Heart right ventricle (tissue), 16 donors: ENCODE measurements at regions of chr11 and their contacts with region 1.

Region 1: DNA sequence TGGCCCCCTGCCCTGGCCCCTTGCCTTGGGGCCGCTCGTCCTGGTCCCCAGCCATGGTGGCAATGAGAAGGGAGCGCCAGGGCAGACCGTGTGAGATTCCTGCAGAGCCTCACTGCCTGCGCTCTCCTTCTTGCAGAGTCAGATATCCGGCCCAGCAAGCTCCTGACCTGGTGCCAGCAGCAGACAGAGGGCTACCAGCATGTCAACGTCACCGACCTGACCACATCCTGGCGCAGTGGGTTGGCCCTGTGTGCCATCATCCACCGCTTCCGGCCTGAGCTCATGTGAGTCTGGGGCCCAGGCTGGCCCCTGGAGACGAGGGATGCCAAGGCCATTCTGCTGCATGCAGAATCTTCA is 114.1 kb downstream of the MICAL2 start:
- DNase-seq: peak; percentile 76
- ATAC-seq: peak; percentile 20 to 59 (median 34)
- H3K4me3 ChIP-seq: peak overlapping the region in 1 of 10 donors; percentile 19
- H3K27ac ChIP-seq: peak overlapping the region in 8 of 10 donors; percentile 30 to 86 (median 52)
- H3K4me1 ChIP-seq: peaks cover 21 to 55% (median 48%) of the 10 kb centered on the region in 9 donors
- H3K27me3 ChIP-seq: no peaks in the 10 kb centered on the region
- CTCF ChIP-seq: no peak

Region 2: GRCh38 chr11:11923828-11924227 is 300.7 kb before region 1 on chr11:
- intact Hi-C with region 1: no loop called
- DNase-seq: no peak
- ATAC-seq: no peak
- H3K4me3 ChIP-seq: no peak overlapping the region
- H3K27ac ChIP-seq: peak overlapping the region in 1 of 10 donors; percentile 1
- H3K4me1 ChIP-seq: peaks cover 0 to 14% (median 0%) of the 10 kb centered on the region in 9 donors
- H3K27me3 ChIP-seq: no peaks in the 10 kb centered on the region
- CTCF ChIP-seq: no peak

Region 3: GRCh38 chr11:12087075-12088004 is 137.2 kb before region 1 on chr11:
- intact Hi-C with region 1: loop called in 1 of 10 experiments (anchors 10 kb)
- DNase-seq: no peak
- ATAC-seq: peak in 4 of 8 donors; percentile 6 to 22 (median 12)
- H3K4me3 ChIP-seq: no peak overlapping the region
- H3K27ac ChIP-seq: peak overlapping the region; percentile 58 to 90 (median 86)
- H3K4me1 ChIP-seq: peaks cover 35 to 76% (median 72%) of the 10 kb centered on the region in 9 donors
- H3K27me3 ChIP-seq: no peaks in the 10 kb centered on the region
- CTCF ChIP-seq: no peak

Region 4: DNA sequence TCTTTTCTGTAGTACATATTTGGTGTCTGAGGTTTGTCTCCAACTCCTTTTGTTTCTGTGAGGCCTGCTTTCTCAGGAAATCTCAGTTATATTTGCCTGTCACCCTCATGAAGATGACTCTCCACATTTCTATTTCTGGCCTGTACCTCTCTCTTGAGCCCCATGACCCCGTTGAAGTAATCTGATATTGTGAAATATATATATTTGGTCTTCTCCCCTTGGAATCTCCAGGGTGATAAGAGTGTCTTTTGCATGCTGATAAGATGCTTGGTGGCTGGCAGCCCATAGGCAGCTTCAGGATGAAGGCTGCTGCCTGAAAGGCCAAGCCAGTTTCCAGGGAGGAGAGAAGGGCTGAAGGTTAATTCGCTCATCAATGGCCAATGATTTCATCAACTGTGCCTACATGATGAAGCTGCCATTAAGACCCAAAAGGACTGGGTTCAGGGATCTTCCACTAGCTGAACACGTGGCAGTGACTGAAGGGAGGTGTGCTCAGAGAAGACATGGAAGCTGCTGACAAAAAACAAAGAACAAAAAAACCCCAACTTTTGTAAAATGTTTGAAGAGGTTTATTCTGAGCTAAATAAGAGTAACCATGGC is 46.7 kb before region 1 on chr11:
- intact Hi-C with region 1: loop called in 1 of 10 experiments (anchors 1 kb)
- DNase-seq: no peak
- ATAC-seq: no peak
- H3K4me3 ChIP-seq: no peak overlapping the region
- H3K27ac ChIP-seq: peak overlapping the region in 7 of 10 donors; percentile 2 to 88 (median 38)
- H3K4me1 ChIP-seq: peaks cover 9 to 70% (median 49%) of the 10 kb centered on the region in 9 donors
- H3K27me3 ChIP-seq: no peaks in the 10 kb centered on the region
- CTCF ChIP-seq: no peak

Region 5: DNA sequence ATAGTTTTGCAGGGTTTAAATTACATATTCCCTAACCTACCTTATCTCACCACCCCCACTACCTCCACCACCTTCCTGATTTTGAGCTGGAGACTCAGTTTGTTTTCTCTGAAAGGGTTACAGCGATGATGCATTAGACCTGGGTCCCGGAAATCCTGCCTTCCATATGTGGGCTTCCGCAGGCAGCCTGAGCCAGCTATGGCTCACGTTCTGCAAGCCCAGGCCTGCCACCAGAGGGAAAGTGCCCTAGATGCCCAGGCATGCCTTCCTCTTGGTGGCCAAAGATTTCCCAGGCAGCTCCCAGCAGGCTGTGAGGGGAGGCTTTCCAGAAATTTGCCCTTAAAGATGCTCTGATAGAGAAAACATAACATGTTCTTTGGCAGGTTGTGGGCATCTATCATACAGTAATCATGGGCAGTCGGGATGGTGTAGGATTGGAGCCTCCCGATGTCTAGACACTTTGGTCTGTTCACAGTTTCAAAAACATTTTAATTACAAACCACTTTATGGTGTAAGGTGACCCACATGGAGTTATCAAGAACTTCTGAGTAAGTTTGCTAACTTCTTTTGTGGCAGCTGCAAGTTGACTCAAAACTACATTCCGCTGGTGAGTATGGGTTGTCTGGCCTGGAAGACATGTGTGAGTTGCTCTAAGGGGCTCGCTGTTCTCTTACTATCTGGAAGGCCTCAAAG is 34.8 kb before region 1 on chr11:
- intact Hi-C with region 1: no loop called
- DNase-seq: no peak
- ATAC-seq: no peak
- H3K4me3 ChIP-seq: no peak overlapping the region
- H3K27ac ChIP-seq: peak overlapping the region in 1 of 10 donors; percentile 47
- H3K4me1 ChIP-seq: peaks cover 0 to 63% (median 45%) of the 10 kb centered on the region in 9 donors
- H3K27me3 ChIP-seq: no peaks in the 10 kb centered on the region
- CTCF ChIP-seq: peak in 2 of 9 donors; percentile 14 to 19

Region 6: DNA sequence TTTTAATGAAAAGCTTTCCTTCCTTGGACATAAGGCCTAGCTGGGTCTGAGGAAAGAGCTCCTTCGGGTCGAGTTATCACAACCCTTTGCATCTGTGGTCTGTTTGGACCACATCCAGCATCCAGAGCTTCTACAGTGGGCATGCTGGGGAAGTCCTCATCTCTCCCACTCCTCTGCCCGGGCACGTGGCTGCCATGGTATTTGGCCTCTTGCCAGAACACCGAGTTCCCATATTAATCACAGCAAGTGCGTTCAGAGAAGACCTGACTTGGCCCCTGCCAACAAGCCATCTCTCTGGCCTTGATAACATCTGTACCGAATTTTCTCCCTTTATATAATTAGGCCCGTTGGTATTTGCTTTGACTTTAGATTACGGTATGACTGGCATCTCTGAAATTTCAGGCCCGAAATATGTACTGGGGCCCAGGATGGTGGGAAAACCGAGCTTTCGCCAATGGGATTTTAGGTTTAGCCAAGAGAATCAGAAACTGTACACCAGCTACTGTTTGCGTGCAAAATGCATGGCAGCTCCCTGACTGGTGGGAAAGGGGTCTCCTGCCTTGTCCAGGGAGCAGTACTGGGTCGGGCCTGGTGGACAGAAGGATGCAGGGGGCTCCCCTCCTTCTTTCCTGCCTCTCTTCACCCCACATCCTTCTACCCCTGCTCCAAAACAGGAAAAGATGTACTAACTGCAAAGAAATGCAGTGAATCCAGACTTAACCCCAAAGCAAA is 24.1 kb before region 1 on chr11:
- intact Hi-C with region 1: no loop called
- DNase-seq: peak in 1 of 2 donors; percentile 68
- ATAC-seq: peak in 7 of 8 donors; percentile 4 to 67 (median 37)
- H3K4me3 ChIP-seq: no peak overlapping the region
- H3K27ac ChIP-seq: peak overlapping the region; percentile 50 to 91 (median 85)
- H3K4me1 ChIP-seq: peaks cover 22 to 68% (median 49%) of the 10 kb centered on the region in 9 donors
- H3K27me3 ChIP-seq: no peaks in the 10 kb centered on the region
- CTCF ChIP-seq: no peak